Ascending aorta (tissue), 2 donors: ENCODE measurements at regions of chr1 and their contacts with region 1.

Region 1: DNA sequence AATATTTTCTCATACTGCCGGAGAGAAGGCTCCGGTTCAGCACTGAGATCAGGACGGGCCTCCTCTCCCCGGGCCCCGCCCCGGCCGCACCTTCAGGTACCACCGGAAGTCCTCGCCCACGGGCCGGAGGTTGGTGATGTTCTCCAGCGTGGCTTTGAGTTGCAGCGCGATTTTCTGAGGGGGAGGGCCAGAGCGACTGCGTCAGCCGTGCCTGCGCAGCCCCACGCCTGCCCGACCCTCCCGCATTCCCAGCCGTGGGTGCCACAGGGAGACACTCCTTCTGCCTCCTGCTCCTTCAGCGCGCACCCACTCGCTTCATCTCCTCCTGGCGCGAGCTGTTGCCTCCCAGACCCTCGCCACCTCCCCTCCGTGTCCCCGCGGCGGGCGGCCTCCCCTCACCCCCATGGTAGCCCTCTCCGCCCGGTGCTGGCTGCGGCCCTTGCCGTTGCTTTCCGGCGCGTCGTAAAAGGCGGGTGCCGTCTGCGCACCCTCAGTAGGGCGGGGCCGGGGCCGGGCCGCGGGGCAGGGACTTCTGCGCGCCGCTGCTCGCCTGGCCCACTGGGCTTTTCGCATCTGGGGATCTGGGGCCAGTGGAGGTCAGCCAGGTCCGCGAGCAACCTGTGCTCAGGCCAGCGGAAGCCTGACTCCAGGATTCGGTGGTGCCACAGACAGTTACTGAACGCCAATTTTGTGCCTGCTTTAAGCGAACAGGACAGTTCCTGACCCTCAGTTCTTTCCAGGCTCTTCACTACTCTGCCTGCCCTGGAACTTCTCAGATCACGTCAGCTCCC is at the start of gene CZIB:
- DNase-seq: peak; percentile 65 to 96
- H3K4me3 ChIP-seq: peak within 1 kb of the TSS; percentile 72 to 88
- H3K27ac ChIP-seq: peak within 1 kb of the TSS; percentile 91 to 98
- H3K4me1 ChIP-seq: peaks cover 3 to 12% of the 10 kb centered on the region in 2 donors
- H3K27me3 ChIP-seq: no peaks in the 10 kb centered on the region
- CTCF ChIP-seq: no peak
- total RNA-seq, gene CZIB: 28.9 TPM

Region 2: DNA sequence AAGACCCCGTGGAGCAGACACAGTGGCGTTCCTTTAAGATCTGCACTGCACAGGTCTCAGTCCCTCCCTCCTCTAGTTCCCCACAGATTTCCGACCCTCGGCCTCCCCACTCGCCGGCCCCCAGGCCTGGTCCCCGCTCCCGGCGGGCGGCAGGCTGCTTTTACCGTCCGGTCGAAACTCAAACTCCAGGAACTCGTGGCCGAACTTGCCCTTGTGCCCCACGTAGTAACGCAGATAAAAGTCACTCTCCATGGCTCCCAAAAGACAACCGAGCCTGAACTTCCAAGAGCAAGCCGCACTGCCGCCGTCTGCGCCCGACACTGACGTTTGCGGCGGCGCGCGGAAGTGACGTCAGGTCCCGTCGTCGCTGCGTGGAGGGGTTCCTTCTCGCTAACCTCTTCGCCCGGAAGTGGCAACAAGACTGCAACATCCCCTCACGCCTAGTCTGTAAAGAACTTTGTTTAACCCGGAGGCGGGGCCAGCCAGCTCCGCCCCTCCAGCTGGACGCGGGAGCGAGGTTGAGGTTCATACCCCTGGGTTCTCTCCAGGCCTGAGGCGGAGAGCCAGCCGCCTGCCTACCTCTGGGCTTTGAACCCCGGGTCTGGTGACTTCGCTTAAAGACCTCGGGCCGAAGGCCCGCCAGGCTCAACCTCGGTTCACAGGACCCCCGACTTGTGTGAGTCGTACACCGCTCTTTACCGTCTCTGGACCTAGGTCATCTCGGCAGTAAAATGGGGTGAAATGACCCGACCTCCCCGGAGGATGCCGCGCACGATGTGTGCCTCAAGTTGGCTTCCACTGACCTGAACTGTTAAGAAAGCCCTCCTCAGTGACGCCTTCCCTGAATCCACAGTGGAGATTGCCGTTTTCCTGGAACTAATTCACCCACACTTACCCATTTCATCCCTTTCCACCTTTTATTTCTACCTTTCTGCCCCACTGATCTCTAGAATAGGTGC is 18.1 kb after region 1 on chr1 and contains the start of gene MAGOH:
- intact Hi-C with region 1: loop called (anchors 1 kb)
- DNase-seq: peak; percentile 72 to 97
- H3K4me3 ChIP-seq: peak within 1 kb of the TSS; percentile 76 to 91
- H3K27ac ChIP-seq: peak within 1 kb of the TSS; percentile 65 to 71
- H3K4me1 ChIP-seq: peaks cover 5 to 18% of the 10 kb centered on the region in 2 donors
- H3K27me3 ChIP-seq: no peaks in the 10 kb centered on the region
- CTCF ChIP-seq: no peak
- total RNA-seq, gene MAGOH: 10.9 TPM